Posterior cingulate gyrus (tissue), 11 donors: ENCODE measurements at regions of chr11 and their contacts with region 1.

Region 1: GRCh38 chr11:406978-407739 is 7.6 kb downstream of the SIGIRR start:
- DNase-seq: peak in 6 of 10 donors; percentile 32 to 90 (median 60)

Region 2: DNA sequence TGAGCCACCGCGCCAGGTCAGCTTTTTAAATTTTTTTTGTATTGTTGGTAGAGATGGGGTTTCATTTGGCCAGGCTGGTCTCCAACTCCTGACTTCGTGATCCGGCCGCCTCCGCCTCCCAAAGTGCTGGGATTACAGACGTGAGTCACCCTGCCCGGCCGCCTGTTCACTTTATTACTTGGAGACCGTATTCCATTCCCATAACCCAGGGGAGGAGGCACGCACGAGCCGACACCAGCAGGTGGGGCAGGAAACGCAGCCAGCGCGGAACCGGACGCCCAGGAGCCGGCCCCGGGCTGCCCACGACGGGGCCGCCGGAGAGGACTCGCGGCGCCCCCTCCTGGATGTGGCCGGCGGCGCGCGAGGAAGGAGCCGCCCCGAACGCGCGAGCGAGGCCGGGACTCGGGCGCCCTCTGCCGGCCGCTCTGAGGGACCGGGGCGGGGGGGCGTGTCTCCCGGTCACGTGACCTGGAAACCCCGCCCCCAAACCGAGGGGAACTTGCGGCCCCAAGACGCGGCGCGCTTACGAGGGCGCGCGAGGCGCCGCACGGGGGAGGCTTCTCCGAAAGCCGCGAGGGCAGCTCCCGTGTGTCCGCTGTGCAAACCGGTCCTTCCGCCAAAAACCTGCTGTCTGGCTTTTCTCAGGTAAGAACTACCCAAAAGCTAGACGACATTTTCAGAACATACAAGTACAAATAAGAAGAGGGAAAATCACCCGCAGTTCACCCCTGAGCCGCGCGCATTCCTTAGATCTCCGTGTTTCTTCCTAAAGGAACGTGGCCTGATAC is 111.5 kb after region 1 on chr11:
- intact Hi-C with region 1: loop called (anchors 2 kb)
- DNase-seq: peak; percentile 54 to 96 (median 76)